MCF 10A (cell line): ENCODE measurements at regions of chr5 and their contacts with region 1.

Region 1: DNA sequence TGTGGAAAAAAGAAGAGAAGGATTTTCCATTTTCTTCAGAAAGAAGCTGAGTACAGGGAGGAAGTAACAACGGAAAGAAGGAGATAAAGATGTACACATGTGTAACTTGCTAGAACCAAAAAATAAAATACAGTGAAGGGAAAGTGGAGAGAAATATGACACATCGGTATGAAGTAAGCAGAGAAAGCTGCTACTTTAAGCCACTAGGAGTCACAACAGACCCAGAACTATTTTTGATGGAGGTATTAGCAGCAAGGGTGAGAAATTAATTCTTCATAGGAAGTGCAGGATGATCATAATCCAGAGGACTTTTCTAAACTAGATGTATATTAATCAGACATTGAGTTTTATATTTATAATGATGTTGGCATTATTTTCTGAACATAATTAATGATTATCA is 88.5 kb downstream of the FAM174A start:
- DNase-seq: peak; percentile 51
- H3K4me3 Mint-ChIP-seq: no peak overlapping the region
- H3K27ac Mint-ChIP-seq: no peak overlapping the region
- H3K4me1 Mint-ChIP-seq: no peaks in the 10 kb centered on the region
- H3K27me3 Mint-ChIP-seq: no peaks in the 10 kb centered on the region
- CTCF ChIP-seq: peak; percentile 65

Region 2: GRCh38 chr5:99104538-99105132 is 1519.1 kb before region 1 on chr5:
- CTCF ChIA-PET with region 1: no interaction called
- POLR2A ChIA-PET with region 1: no interaction called
- intact Hi-C with region 1: loop called (anchors 10 kb)
- DNase-seq: peak; percentile 45
- H3K4me3 Mint-ChIP-seq: no peak overlapping the region
- H3K27ac Mint-ChIP-seq: no peak overlapping the region
- H3K4me1 Mint-ChIP-seq: no peaks in the 10 kb centered on the region
- H3K27me3 Mint-ChIP-seq: peaks cover 72% of the 10 kb centered on the region
- CTCF ChIP-seq: peak; percentile 47

Region 3: GRCh38 chr5:100595152-100595811 is 28.4 kb before region 1 on chr5:
- CTCF ChIA-PET with region 1: no interaction called
- POLR2A ChIA-PET with region 1: no interaction called
- intact Hi-C with region 1: no loop called
- DNase-seq: peak; percentile 82
- H3K4me3 Mint-ChIP-seq: peak overlapping the region; percentile 1
- H3K27ac Mint-ChIP-seq: peak overlapping the region; percentile 28
- H3K4me1 Mint-ChIP-seq: peaks cover 15% of the 10 kb centered on the region
- H3K27me3 Mint-ChIP-seq: no peaks in the 10 kb centered on the region
- CTCF ChIP-seq: no peak

Region 4: DNA sequence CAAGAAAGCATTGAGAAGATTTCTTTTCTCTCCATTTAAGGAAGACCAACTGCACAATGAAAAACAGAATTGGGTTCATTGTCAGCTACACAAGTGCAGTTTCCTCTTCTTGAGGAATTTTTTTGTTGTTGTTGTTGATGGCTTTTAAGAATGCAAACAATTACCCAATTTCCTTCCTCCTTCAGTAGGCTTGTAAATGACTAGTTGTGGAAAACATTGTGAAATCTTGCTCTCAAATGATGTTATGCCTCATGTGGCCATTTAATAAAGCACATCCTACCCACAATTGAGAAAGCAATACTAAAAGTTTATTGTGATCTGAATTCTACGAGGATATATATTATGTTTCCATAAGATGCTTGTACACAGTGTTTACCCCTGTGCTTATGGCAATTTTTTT is 83.1 kb after region 1 on chr5:
- CTCF ChIA-PET with region 1: no interaction called
- POLR2A ChIA-PET with region 1: no interaction called
- intact Hi-C with region 1: loop called (anchors 5 kb)
- DNase-seq: peak; percentile 58
- H3K4me3 Mint-ChIP-seq: no peak overlapping the region
- H3K27ac Mint-ChIP-seq: no peak overlapping the region
- H3K4me1 Mint-ChIP-seq: no peaks in the 10 kb centered on the region
- H3K27me3 Mint-ChIP-seq: no peaks in the 10 kb centered on the region
- CTCF ChIP-seq: peak; percentile 41

Region 5: DNA sequence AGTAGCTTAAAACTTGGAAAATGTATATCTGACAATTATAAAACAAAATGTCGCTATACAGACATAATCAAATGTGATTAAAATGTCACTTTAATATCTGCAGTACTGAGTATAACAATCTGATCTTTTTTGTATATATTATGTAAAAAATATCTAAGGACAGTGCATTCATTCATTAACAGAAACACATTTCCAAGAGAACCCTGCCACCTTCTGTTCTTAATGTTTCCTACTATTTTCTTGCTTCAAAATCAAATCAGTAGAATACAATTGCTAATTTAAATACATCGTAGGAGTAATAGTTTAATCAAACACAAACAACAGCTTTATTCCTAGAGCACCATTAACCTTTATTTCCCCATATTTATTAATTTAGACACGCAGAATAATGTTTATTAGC is 422.0 kb after region 1 on chr5:
- CTCF ChIA-PET with region 1: no interaction called
- POLR2A ChIA-PET with region 1: no interaction called
- intact Hi-C with region 1: loop called (anchors 1 kb)
- DNase-seq: peak; percentile 9
- H3K4me3 Mint-ChIP-seq: no peak overlapping the region
- H3K27ac Mint-ChIP-seq: no peak overlapping the region
- H3K4me1 Mint-ChIP-seq: no peaks in the 10 kb centered on the region
- H3K27me3 Mint-ChIP-seq: no peaks in the 10 kb centered on the region
- CTCF ChIP-seq: peak; percentile 30

Region 6: DNA sequence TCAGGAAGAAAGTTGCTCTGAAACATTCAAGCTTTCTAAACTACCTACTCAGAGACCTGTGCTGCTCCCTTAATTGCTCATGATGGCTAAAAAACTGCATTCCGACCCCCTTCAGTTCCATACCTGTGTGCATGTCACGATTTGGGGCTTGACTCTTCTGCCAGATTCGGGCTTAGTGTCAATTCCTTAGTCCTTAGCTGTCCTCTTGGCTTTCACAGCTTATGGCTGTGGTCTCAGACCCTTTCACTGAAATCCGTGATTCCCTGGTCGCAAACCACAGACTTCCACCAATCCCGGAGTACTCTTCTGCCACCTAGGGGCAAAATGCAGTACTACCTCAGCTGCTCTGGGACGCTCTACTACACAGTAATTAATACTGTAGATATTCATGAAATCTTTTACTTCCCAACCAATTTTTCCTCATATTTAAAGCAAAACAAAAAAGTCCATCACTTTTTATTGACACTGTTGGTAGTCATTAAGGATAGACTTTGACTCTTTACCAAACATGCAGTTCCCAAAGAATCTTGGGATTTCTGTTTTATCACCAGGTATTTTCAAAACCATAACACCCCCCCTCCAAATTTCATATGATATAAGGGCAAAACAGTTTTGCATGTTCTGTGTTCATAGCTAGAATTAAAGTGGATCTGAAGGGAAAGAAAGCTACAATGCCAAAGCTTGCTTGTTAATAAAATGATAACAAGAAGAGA is 1054.9 kb after region 1 on chr5:
- CTCF ChIA-PET with region 1: no interaction called
- POLR2A ChIA-PET with region 1: no interaction called
- intact Hi-C with region 1: loop called (anchors 5 kb)
- DNase-seq: peak; percentile 66
- H3K4me3 Mint-ChIP-seq: no peak overlapping the region
- H3K27ac Mint-ChIP-seq: no peak overlapping the region
- H3K4me1 Mint-ChIP-seq: peaks cover 27% of the 10 kb centered on the region
- H3K27me3 Mint-ChIP-seq: peaks cover 24% of the 10 kb centered on the region
- CTCF ChIP-seq: peak; percentile 89